ENCODE measurements at regions of chr17 and their contacts with region 1.

Region 1: GRCh38 chr17:409848-410545 is 57.4 kb upstream of the RPH3AL start:
- DNase-seq: peak; percentile 98 to 100 (median 100)
- ATAC-seq: peak; percentile 88 to 96 (median 94)
- H3K4me3 ChIP-seq: peak overlapping the region; percentile 63 to 93 (median 80)
- H3K27ac ChIP-seq: peak overlapping the region; percentile 47 to 64 (median 60)
- H3K4me1 ChIP-seq: peaks cover 0 to 13% (median 7%) of the 10 kb centered on the region in 3 donors
- H3K27me3 ChIP-seq: no peaks in the 10 kb centered on the region
- CTCF ChIP-seq: no peak

Region 2: DNA sequence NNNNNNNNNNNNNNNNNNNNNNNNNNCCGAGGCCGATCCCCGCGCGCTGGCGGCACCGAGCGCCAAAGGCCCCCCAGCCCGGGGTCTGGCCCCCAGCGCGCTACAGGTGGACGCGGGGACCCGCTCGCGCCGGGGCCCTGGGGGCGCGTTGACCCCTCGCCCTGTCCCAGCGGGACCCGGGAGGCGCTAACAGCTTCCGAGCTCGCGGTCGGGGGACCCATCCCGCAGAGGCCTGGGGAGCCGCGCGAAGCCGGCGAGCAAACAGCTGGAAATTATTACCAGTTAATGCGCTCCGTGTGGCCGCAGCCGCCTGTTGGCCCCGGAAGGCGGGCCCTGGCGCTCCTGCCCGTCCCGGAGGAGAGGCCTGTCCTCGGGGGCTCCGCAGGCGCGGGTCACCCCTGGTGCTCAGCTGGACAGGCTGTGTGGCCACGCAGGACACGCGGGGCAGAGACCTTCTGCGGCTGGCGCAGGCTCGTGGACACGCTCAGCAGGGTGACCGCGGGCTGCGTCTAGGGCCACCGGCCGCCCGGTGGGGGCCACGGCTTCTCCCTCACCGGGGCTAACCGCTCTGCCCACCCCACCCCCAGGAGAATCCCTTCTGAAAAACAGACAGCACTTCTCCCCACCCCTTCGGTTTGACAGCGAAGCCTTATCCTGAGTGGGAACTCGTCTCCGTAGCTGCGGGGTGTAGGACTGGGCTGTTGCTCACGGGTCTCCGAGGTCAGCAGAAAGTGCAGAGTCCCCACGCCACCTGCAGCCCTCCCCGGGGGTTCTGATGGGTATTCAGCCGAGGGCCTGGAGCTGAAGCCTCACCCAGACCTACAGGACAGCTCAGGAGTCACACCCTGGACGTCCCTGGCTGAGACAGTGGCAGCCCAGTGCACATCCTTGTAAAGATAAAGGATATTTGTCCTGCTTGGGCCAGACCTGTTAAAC is 81.4 kb after region 1 on chr17:
- intact Hi-C with region 1: no loop called
- DNase-seq: peak; percentile 37 to 81 (median 66)
- ATAC-seq: peak; percentile 57 to 83 (median 81)
- H3K4me3 ChIP-seq: peak overlapping the region; percentile 9 to 53 (median 34)
- H3K27ac ChIP-seq: peak overlapping the region in 1 of 4 donors; percentile 36
- H3K4me1 ChIP-seq: peaks cover 0 to 6% (median 0%) of the 10 kb centered on the region in 3 donors
- H3K27me3 ChIP-seq: no peaks in the 10 kb centered on the region
- CTCF ChIP-seq: no peak

Region 3: DNA sequence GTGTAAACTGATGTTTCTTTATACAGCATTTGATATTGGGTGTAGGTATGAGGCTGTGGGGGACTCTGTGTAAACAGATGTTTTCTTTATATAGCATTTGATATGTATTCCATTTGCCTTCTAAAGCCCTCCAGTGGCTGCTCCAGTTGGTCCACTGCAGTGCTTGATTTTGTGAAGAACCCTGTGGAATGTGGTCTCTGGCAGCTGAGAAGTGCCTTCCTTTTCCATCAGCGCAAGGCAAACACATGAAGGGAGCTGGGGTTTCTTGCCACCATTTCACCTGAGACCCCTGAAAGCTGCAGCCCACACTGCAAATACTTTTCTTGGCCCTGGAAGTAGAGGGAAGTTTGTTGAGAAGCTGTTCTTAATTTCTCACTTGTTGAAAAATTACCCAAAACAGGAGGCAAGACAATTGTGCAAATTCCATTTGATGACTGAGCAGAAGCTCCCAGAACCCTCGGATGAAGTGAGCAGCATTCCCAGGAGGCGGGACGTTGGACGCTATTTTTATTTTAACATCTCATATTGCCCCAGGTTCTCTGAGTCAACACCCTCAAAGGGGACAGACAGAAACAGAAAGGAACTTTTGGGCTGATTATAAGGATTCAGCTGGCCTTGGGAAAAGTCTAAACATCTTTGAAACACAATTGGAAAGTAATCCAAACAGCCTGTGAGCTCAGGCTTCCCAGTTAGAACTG is 101.2 kb after region 1 on chr17:
- intact Hi-C with region 1: no loop called
- DNase-seq: no peak
- ATAC-seq: peak in 2 of 4 donors; percentile 13 to 17
- H3K4me3 ChIP-seq: no peak overlapping the region
- H3K27ac ChIP-seq: no peak overlapping the region
- H3K4me1 ChIP-seq: no peaks in the 10 kb centered on the region
- H3K27me3 ChIP-seq: no peaks in the 10 kb centered on the region
- CTCF ChIP-seq: no peak

Region 4: GRCh38 chr17:700504-701094 is 290.6 kb after region 1 on chr17:
- intact Hi-C with region 1: loop called in 1 of 3 experiments (anchors 5 kb)
- DNase-seq: no peak
- ATAC-seq: peak in 3 of 4 donors; percentile 65 to 74 (median 68)
- H3K4me3 ChIP-seq: no peak overlapping the region
- H3K27ac ChIP-seq: no peak overlapping the region
- H3K4me1 ChIP-seq: no peaks in the 10 kb centered on the region
- H3K27me3 ChIP-seq: no peaks in the 10 kb centered on the region
- CTCF ChIP-seq: peak; percentile 40 to 59 (median 54)